Activated CD8-positive, alpha-beta T cell treated with anti-CD3 and anti-CD28 coated beads, Interleukin-2, amount 10 ng/mL, durations not matched to agents 7 days and 5 days (primary cell): ENCODE measurements at regions of chr6 and their contacts with region 1.

Region 1: GRCh38 chr6:27809939-27810767 is 102.0 kb downstream of the OR2B2 start:
- DNase-seq: peak; percentile 89
- ATAC-seq: peak; percentile 32
- H3K4me3 Mint-ChIP-seq: peak overlapping the region; percentile 95
- H3K27ac Mint-ChIP-seq: peak overlapping the region; percentile 98
- H3K4me1 Mint-ChIP-seq: peaks cover 66% of the 10 kb centered on the region
- H3K27me3 Mint-ChIP-seq: peaks cover 2% of the 10 kb centered on the region

Region 2: DNA sequence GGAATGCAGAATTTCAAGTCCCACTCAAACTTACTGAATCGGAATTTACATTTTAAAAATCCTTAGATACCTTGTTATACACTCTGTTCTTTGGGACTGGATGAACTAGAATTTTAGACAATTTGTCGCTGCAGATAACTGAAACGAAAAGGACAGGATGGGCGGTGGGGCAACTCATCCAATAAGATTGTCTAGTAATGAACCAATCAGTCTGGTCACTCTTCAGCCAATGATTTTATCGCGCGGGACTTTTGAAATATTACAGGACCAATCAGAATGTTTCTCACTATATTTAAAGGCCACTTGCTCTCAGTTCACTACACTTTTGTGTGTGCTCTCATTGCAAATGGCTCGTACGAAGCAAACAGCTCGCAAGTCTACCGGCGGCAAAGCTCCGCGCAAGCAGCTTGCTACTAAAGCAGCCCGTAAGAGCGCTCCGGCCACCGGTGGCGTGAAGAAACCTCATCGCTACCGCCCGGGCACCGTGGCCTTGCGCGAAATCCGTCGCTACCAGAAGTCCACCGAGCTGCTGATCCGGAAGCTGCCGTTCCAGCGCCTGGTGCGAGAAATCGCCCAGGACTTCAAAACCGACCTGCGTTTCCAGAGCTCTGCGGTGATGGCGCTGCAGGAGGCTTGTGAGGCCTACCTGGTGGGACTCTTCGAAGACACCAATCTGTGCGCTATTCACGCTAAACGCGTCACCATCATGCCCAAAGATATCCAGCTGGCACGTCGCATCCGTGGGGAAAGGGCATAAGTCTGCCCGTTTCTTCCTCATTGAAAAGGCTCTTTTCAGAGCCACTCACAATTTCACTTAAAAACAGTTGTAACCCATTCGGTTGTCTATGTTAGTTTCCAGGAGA is 1764.9 kb before region 1 on chr6:
- CTCF ChIA-PET with region 1: no interaction called
- POLR2A ChIA-PET with region 1: interaction called, 11 read pairs
- DNase-seq: peak; percentile 91
- ATAC-seq: peak; percentile 55
- H3K4me3 Mint-ChIP-seq: peak overlapping the region; percentile 88
- H3K27ac Mint-ChIP-seq: peak overlapping the region; percentile 99
- H3K4me1 Mint-ChIP-seq: peaks cover 43% of the 10 kb centered on the region
- H3K27me3 Mint-ChIP-seq: no peaks in the 10 kb centered on the region

Region 3: GRCh38 chr6:26204332-26205165 is 1605.6 kb before region 1 on chr6:
- CTCF ChIA-PET with region 1: no interaction called
- POLR2A ChIA-PET with region 1: interaction called, 111 read pairs
- DNase-seq: peak; percentile 95
- ATAC-seq: peak; percentile 66
- H3K4me3 Mint-ChIP-seq: no peak overlapping the region
- H3K27ac Mint-ChIP-seq: no peak overlapping the region
- H3K4me1 Mint-ChIP-seq: peaks cover 41% of the 10 kb centered on the region
- H3K27me3 Mint-ChIP-seq: no peaks in the 10 kb centered on the region

Region 4: DNA sequence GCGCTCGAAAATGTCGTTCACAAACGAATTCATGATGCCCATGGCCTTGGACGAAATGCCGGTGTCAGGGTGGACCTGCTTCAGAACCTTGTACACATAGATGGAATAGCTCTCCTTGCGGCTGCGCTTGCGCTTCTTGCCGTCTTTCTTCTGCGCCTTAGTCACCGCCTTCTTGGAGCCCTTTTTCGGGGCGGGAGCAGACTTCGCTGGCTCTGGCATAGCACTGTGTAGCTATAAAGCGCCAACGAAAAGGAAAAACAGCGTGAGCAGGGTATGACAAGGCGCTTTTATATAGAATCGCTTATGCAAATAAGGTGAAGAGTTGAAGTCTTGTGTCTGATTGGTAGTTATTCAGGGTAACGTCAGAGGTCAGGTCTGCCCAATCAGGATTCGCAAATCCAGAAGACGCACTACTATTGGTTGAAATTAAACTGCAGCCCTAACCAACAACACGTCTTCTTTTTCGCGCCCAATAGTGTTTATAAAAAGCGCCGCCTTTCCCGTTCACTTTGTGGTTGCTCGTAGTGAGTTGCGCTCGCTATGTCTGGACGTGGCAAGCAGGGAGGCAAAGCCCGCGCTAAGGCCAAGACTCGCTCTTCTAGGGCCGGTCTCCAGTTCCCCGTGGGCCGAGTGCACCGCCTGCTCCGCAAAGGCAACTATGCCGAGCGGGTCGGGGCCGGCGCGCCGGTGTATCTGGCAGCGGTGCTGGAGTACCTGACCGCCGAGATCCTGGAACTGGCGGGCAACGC is 677.4 kb before region 1 on chr6:
- CTCF ChIA-PET with region 1: interaction called, 3 read pairs
- POLR2A ChIA-PET with region 1: interaction called, 480 read pairs
- DNase-seq: peak; percentile 95
- ATAC-seq: peak; percentile 76
- H3K4me3 Mint-ChIP-seq: no peak overlapping the region
- H3K27ac Mint-ChIP-seq: no peak overlapping the region
- H3K4me1 Mint-ChIP-seq: peaks cover 68% of the 10 kb centered on the region
- H3K27me3 Mint-ChIP-seq: no peaks in the 10 kb centered on the region

Region 5: GRCh38 chr6:27720607-27721580 is 89.3 kb before region 1 on chr6:
- CTCF ChIA-PET with region 1: no interaction called
- POLR2A ChIA-PET with region 1: no interaction called
- DNase-seq: no peak
- ATAC-seq: no peak
- H3K4me3 Mint-ChIP-seq: no peak overlapping the region
- H3K27ac Mint-ChIP-seq: no peak overlapping the region
- H3K4me1 Mint-ChIP-seq: peaks cover 21% of the 10 kb centered on the region
- H3K27me3 Mint-ChIP-seq: peaks cover 22% of the 10 kb centered on the region

Region 6: GRCh38 chr6:27753668-27754407 is 56.3 kb before region 1 on chr6:
- CTCF ChIA-PET with region 1: no interaction called
- POLR2A ChIA-PET with region 1: interaction called, 14 read pairs
- DNase-seq: peak; percentile 86
- ATAC-seq: peak; percentile 69
- H3K4me3 Mint-ChIP-seq: peak overlapping the region; percentile 90
- H3K27ac Mint-ChIP-seq: peak overlapping the region; percentile 76
- H3K4me1 Mint-ChIP-seq: peaks cover 41% of the 10 kb centered on the region
- H3K27me3 Mint-ChIP-seq: peaks cover 6% of the 10 kb centered on the region

Region 7: GRCh38 chr6:27838058-27838944 is 28.1 kb after region 1 on chr6:
- CTCF ChIA-PET with region 1: interaction called, 8 read pairs
- POLR2A ChIA-PET with region 1: interaction called, 697 read pairs
- DNase-seq: peak; percentile 92
- ATAC-seq: peak; percentile 78
- H3K4me3 Mint-ChIP-seq: no peak overlapping the region
- H3K27ac Mint-ChIP-seq: no peak overlapping the region
- H3K4me1 Mint-ChIP-seq: peaks cover 33% of the 10 kb centered on the region
- H3K27me3 Mint-ChIP-seq: no peaks in the 10 kb centered on the region